Activated naive CD4-positive, alpha-beta T cell treated with anti-CD3 and anti-CD28 coated beads for 36 hours (primary cell): ENCODE measurements at regions of chr12 and their contacts with region 1.

Region 1: GRCh38 chr12:26832822-26833742 is at the start of gene ITPR2:
- DNase-seq: peak; percentile 95
- H3K4me3 Mint-ChIP-seq: peak within 1 kb of the TSS; percentile 99
- H3K27ac Mint-ChIP-seq: peak within 1 kb of the TSS; percentile 97
- H3K4me1 Mint-ChIP-seq: peaks cover 30% of the 10 kb centered on the region
- H3K27me3 Mint-ChIP-seq: no peaks in the 10 kb centered on the region
- total RNA-seq, gene ITPR2: 24.4 to 24.5 TPM

Region 2: GRCh38 chr12:26113853-26114719 is 719.0 kb before region 1 on chr12:
- CTCF ChIA-PET with region 1: no interaction called
- intact Hi-C with region 1: loop called (anchors 2 kb)
- DNase-seq: peak; percentile 82
- H3K4me3 Mint-ChIP-seq: peak overlapping the region; percentile 68
- H3K27ac Mint-ChIP-seq: peak overlapping the region; percentile 22
- H3K4me1 Mint-ChIP-seq: peaks cover 6% of the 10 kb centered on the region
- H3K27me3 Mint-ChIP-seq: peaks cover 35% of the 10 kb centered on the region

Region 3: DNA sequence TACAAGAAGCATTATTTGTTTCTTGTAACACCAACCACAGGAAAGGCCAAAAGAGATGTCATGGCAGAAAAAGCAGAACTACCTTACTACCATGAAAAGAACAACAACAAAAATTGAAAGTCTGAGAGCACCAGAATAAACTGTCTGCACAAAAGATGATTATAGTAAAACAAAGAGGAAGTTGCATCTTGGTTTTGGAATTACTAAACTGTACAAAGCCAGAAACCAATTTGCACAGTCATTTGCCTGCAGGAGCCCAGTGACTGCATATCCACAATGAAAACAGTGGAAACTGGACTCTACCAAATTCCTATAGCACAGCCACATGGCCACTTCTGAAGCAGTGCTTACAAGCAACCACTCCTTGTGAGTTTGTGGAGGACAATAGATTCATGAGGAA is 361.5 kb before region 1 on chr12:
- CTCF ChIA-PET with region 1: no interaction called
- intact Hi-C with region 1: loop called (anchors 5 kb)
- DNase-seq: peak; percentile 39
- H3K4me3 Mint-ChIP-seq: no peak overlapping the region
- H3K27ac Mint-ChIP-seq: peak overlapping the region; percentile 33
- H3K4me1 Mint-ChIP-seq: peaks cover 12% of the 10 kb centered on the region
- H3K27me3 Mint-ChIP-seq: no peaks in the 10 kb centered on the region

Region 4: GRCh38 chr12:26845057-26845666 is 12.1 kb after region 1 on chr12:
- CTCF ChIA-PET with region 1: interaction called, 6 read pairs
- intact Hi-C with region 1: loop called (anchors 1 kb)
- DNase-seq: peak; percentile 24
- H3K4me3 Mint-ChIP-seq: no peak overlapping the region
- H3K27ac Mint-ChIP-seq: no peak overlapping the region
- H3K4me1 Mint-ChIP-seq: peaks cover 10% of the 10 kb centered on the region
- H3K27me3 Mint-ChIP-seq: peaks cover 9% of the 10 kb centered on the region

Region 5: DNA sequence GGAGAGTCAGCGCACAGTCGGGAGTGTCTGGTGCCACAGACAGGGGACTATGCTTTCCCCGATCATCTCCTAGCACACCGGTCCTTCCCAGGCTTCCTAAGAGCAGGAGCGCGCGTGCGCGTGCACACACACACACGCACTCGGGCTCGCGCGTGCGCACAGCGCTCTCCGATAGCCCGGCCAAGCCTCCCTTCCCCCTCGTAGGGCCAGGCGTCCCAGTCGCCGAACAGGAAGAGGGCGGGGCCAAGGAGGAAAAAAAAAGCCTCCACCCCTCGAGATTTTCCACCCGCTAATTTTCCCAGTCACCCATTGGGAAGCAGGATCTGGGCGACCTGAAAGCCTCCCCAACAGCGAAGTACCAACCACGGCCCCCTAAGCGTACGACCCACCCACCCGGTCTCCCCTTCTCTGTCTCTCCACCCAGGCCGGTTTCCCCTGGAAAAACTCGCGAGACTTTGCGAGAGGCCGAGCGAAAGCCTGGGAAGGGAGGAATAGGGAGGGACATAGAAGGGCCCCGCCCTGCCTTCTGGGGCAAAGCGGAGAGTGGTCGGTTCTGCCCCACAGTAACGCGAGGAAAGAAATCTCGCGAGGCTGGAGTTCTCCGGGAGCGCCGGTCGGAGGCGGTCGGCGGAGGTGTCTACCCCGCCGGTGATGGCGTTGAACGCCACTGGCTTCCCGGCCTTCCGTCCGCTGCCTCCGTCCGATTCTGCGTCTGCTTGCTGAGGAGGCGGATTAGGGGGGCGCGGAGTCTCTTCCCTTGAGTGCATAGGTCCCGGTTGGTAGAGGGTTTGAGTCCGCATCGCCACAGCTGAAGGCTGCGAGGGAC is 105.0 kb after region 1 on chr12 and contains the starts of genes FGFR1OP2 and INTS13:
- CTCF ChIA-PET with region 1: interaction called, 3 read pairs
- intact Hi-C with region 1: loop called (anchors 1 kb)
- DNase-seq: peak; percentile 99
- H3K4me3 Mint-ChIP-seq: peak within 1 kb of the TSS; percentile 93
- H3K27ac Mint-ChIP-seq: peak within 1 kb of the TSS; percentile 98
- H3K4me1 Mint-ChIP-seq: peaks cover 52% of the 10 kb centered on the region
- H3K27me3 Mint-ChIP-seq: no peaks in the 10 kb centered on the region
- total RNA-seq, gene FGFR1OP2: 37.0 to 38.4 TPM
- total RNA-seq, gene INTS13: 39.6 to 42.0 TPM

Region 6: GRCh38 chr12:27024291-27024690 is 191.2 kb after region 1 on chr12:
- CTCF ChIA-PET with region 1: no interaction called
- intact Hi-C with region 1: no loop called
- DNase-seq: no peak
- H3K4me3 Mint-ChIP-seq: no peak overlapping the region
- H3K27ac Mint-ChIP-seq: no peak overlapping the region
- H3K4me1 Mint-ChIP-seq: peaks cover 30% of the 10 kb centered on the region
- H3K27me3 Mint-ChIP-seq: no peaks in the 10 kb centered on the region

Region 7: GRCh38 chr12:27243804-27244683 is 411.0 kb after region 1 on chr12 and contains the start of gene STK38L:
- CTCF ChIA-PET with region 1: no interaction called
- intact Hi-C with region 1: loop called (anchors 1 kb)
- DNase-seq: peak; percentile 98
- H3K4me3 Mint-ChIP-seq: peak within 1 kb of the TSS; percentile 98
- H3K27ac Mint-ChIP-seq: peak within 1 kb of the TSS; percentile 91
- H3K4me1 Mint-ChIP-seq: peaks cover 47% of the 10 kb centered on the region
- H3K27me3 Mint-ChIP-seq: no peaks in the 10 kb centered on the region
- total RNA-seq, gene STK38L: 21.3 to 21.4 TPM

Region 8: DNA sequence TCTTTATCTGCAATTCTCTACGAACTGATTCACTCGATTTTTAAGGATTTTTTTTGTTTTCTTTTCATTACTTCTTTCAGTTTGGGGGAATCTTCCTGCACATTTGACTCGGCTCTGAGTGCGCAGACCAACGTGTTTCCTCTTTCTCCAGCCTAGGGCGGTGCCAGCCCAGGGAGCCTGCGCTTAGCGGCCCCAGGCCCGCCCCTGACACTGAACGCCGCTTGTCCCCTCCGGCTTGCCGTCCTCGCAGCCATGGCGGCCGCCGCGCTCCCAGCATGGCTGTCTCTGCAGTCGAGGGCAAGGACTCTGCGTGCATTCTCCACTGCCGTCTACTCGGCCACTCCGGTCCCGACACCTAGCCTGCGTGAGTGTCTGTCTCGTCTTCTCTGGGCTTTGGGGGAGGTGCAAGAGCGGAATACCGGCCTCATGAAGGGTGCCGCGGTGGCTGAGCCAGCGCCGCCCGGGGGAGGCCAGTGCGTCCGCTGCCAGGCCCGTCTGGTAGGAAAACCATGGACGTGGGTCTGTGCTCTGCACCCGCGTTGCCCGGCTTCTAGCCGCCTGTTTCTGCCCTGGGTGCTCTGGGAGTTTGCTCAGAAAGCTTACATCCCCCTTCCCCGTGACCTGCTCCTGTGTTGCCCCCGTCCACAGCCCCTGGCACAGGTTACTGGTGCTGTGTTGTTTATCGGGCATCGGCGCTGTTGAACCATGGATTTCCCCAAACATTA is 877.7 kb after region 1 on chr12 and contains the start of gene MRPS35:
- CTCF ChIA-PET with region 1: no interaction called
- intact Hi-C with region 1: loop called (anchors 1 kb)
- DNase-seq: peak; percentile 95
- H3K4me3 Mint-ChIP-seq: peak within 1 kb of the TSS; percentile 98
- H3K27ac Mint-ChIP-seq: peak within 1 kb of the TSS; percentile 92
- H3K4me1 Mint-ChIP-seq: peaks cover 18% of the 10 kb centered on the region
- H3K27me3 Mint-ChIP-seq: no peaks in the 10 kb centered on the region
- total RNA-seq, gene MRPS35: 53.1 to 57.6 TPM